ENCODE measurements at regions of chr15 and their contacts with region 1.

Region 1: GRCh38 chr15:64162870-64163658 is at the start of gene PPIB:
- DNase-seq: peak; percentile 93 to 98 (median 96)
- ATAC-seq: peak; percentile 93
- H3K4me3 ChIP-seq: peak within 1 kb of the TSS; percentile 88 to 92
- H3K4me3 Mint-ChIP-seq: peak within 1 kb of the TSS; percentile 90
- H3K27ac ChIP-seq: peak within 1 kb of the TSS; percentile 79 to 88
- H3K27ac Mint-ChIP-seq: peak within 1 kb of the TSS; percentile 87
- H3K4me1 ChIP-seq: peaks cover 38% of the 10 kb centered on the region
- H3K4me1 Mint-ChIP-seq: peaks cover 41% of the 10 kb centered on the region
- H3K27me3 ChIP-seq: no peaks in the 10 kb centered on the region
- H3K27me3 Mint-ChIP-seq: no peaks in the 10 kb centered on the region
- CTCF ChIP-seq: no peak
- total RNA-seq, gene PPIB: 148 to 156 TPM

Region 2: GRCh38 chr15:63833021-63833696 is 329.9 kb before region 1 on chr15:
- CTCF ChIA-PET with region 1: no interaction called
- POLR2A ChIA-PET with region 1: no interaction called
- intact Hi-C with region 1: loop called (anchors 1 to 5 kb)
- DNase-seq: peak in 7 of 9 experiments; percentile 10 to 59 (median 28)
- ATAC-seq: peak; percentile 34
- H3K4me3 ChIP-seq: peak overlapping the region; percentile 93 to 99
- H3K4me3 Mint-ChIP-seq: peak overlapping the region; percentile 98
- H3K27ac ChIP-seq: peak overlapping the region; percentile 92 to 98
- H3K27ac Mint-ChIP-seq: peak overlapping the region; percentile 94
- H3K4me1 ChIP-seq: peaks cover 40% of the 10 kb centered on the region
- H3K4me1 Mint-ChIP-seq: peaks cover 56% of the 10 kb centered on the region
- H3K27me3 ChIP-seq: no peaks in the 10 kb centered on the region
- H3K27me3 Mint-ChIP-seq: no peaks in the 10 kb centered on the region
- CTCF ChIP-seq: no peak

Region 3: GRCh38 chr15:64067564-64068030 is 95.5 kb before region 1 on chr15:
- CTCF ChIA-PET with region 1: no interaction called
- POLR2A ChIA-PET with region 1: no interaction called
- intact Hi-C with region 1: no loop called
- DNase-seq: peak; percentile 49 to 83 (median 71)
- ATAC-seq: peak; percentile 91
- H3K4me3 ChIP-seq: no peak overlapping the region
- H3K4me3 Mint-ChIP-seq: no peak overlapping the region
- H3K27ac ChIP-seq: no peak overlapping the region
- H3K27ac Mint-ChIP-seq: no peak overlapping the region
- H3K4me1 ChIP-seq: no peaks in the 10 kb centered on the region
- H3K4me1 Mint-ChIP-seq: peaks cover 5% of the 10 kb centered on the region
- H3K27me3 ChIP-seq: no peaks in the 10 kb centered on the region
- H3K27me3 Mint-ChIP-seq: no peaks in the 10 kb centered on the region
- CTCF ChIP-seq: peak; percentile 81

Region 4: GRCh38 chr15:64315136-64315660 is 152.1 kb after region 1 on chr15:
- CTCF ChIA-PET with region 1: no interaction called
- POLR2A ChIA-PET with region 1: no interaction called
- intact Hi-C with region 1: no loop called
- DNase-seq: no peak
- ATAC-seq: no peak
- H3K4me3 ChIP-seq: no peak overlapping the region
- H3K4me3 Mint-ChIP-seq: no peak overlapping the region
- H3K27ac ChIP-seq: no peak overlapping the region
- H3K27ac Mint-ChIP-seq: peak overlapping the region; percentile 29
- H3K4me1 ChIP-seq: no peaks in the 10 kb centered on the region
- H3K4me1 Mint-ChIP-seq: peaks cover 25% of the 10 kb centered on the region
- H3K27me3 ChIP-seq: no peaks in the 10 kb centered on the region
- H3K27me3 Mint-ChIP-seq: no peaks in the 10 kb centered on the region
- CTCF ChIP-seq: no peak

Region 5: DNA sequence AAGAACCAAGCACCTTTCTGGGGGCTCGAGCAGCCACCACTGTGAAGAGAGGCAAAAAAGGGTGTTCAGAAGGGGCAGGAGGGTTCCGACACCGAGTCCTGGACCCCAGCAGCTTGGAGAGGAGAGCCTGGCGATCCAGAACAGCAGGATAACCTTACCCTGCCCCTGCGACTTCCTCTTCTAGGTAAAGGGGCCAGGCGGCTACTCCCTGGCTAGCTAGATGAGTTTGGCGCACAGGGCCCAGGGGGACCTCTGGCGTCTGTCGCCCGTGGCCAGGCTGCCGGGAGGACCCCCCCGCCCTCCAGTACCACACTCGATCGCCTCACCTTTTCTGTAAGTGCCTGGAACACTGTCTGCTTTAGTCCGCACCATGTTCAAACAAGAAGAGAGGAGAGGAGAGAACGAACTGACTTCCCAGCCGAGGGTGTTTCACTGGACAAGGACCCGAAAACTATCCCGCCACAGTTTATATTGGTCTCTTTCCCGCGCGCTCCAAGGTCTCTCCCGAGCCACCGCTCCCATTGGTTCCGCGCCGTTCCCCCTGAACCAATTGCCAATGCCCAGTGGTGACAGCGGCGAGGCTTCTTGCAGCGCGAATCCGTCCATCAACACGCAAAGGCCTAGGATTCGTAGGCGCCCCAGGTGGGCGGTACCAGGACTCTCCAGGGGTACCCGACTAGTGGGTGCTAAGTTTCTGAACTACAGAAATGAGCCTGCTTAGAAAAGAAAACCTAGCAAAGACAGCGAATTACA is 218.1 kb after region 1 on chr15 and contains the start of gene PCLAF:
- CTCF ChIA-PET with region 1: no interaction called
- POLR2A ChIA-PET with region 1: no interaction called
- intact Hi-C with region 1: loop called in 1 of 2 experiments (anchors 1 kb)
- DNase-seq: peak; percentile 80 to 95 (median 91)
- ATAC-seq: peak; percentile 100
- H3K4me3 ChIP-seq: peak within 1 kb of the TSS; percentile 62 to 65
- H3K4me3 Mint-ChIP-seq: peak within 1 kb of the TSS; percentile 91
- H3K27ac ChIP-seq: no peak within 1 kb of the TSS
- H3K27ac Mint-ChIP-seq: peak within 1 kb of the TSS; percentile 8
- H3K4me1 ChIP-seq: peaks cover 5% of the 10 kb centered on the region
- H3K4me1 Mint-ChIP-seq: peaks cover 12% of the 10 kb centered on the region
- H3K27me3 ChIP-seq: no peaks in the 10 kb centered on the region
- H3K27me3 Mint-ChIP-seq: no peaks in the 10 kb centered on the region
- CTCF ChIP-seq: no peak
- total RNA-seq, gene PCLAF: 0.65 to 0.83 TPM

Region 6: DNA sequence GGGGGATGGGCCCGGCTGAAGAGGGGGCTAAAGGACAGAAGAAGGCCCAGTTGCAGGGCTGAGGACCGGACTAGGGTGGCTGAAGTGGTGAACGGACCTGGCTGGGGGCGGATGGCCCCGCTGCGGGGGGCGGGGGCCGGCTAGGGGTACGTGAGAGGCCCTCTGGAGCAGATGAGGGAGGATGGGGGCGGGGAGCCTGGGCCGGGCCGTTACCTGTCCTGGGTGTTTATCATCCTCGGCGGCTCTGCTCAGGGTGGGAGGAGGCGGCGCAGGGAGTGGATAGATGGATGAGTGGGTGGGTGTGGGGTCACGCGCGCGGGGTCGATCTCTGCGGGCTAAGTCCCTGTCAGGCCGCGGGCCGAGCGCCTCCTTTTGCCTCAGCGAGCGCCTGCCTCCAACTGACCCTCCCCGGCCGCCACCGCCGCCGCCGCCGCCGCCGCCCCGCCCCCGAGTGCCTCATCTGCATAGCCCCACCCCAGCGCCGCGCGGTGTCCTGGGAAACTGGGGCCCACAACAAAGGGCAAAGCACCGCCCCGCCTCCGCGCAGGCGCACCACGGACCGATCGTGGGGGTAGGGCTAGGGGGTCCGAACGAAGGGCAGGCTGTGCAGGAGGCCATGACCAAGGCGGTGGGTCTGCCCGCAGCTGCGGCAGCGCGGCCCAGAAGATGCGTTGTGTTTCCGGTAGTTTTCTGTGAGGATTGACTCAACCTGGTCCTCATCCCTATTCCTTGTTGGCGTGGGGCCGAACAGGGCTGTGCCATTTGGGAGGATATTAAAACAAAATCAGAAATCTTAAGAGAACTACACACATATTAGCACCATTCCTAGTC is 540.0 kb after region 1 on chr15:
- CTCF ChIA-PET with region 1: no interaction called
- POLR2A ChIA-PET with region 1: no interaction called
- intact Hi-C with region 1: loop called (anchors 1 to 2 kb)
- DNase-seq: peak; percentile 90 to 97 (median 95)
- ATAC-seq: peak; percentile 95
- H3K4me3 ChIP-seq: peak overlapping the region; percentile 79 to 86
- H3K4me3 Mint-ChIP-seq: peak overlapping the region; percentile 91
- H3K27ac ChIP-seq: peak overlapping the region; percentile 60 to 66
- H3K27ac Mint-ChIP-seq: peak overlapping the region; percentile 92
- H3K4me1 ChIP-seq: peaks cover 47% of the 10 kb centered on the region
- H3K4me1 Mint-ChIP-seq: peaks cover 51% of the 10 kb centered on the region
- H3K27me3 ChIP-seq: no peaks in the 10 kb centered on the region
- H3K27me3 Mint-ChIP-seq: no peaks in the 10 kb centered on the region
- CTCF ChIP-seq: no peak